WTC11 (cell line): ENCODE measurements at regions of chr1 and their contacts with region 1.

Region 1: GRCh38 chr1:33181921-33182341 is at the start of gene TRIM62:
- DNase-seq: peak; percentile 77
- ATAC-seq: peak; percentile 60
- H3K4me3 Mint-ChIP-seq: peak within 1 kb of the TSS; percentile 79
- H3K27ac Mint-ChIP-seq: peak within 1 kb of the TSS; percentile 60; the same call in 1 of the 2 replicates
- H3K4me1 Mint-ChIP-seq: peaks cover 24% of the 10 kb centered on the region
- H3K27me3 Mint-ChIP-seq: peaks cover 8% of the 10 kb centered on the region
- CTCF ChIP-seq: no peak
- total RNA-seq, gene TRIM62: 10.7 to 13.6 TPM (median 11.0 TPM) in 3 replicates

Region 2: GRCh38 chr1:32861904-32862695 is 319.8 kb before region 1 on chr1:
- CTCF ChIA-PET with region 1: no interaction called
- POLR2A ChIA-PET with region 1: no interaction called
- DNase-seq: no peak
- ATAC-seq: no peak
- H3K4me3 Mint-ChIP-seq: no peak overlapping the region
- H3K27ac Mint-ChIP-seq: no peak overlapping the region
- H3K4me1 Mint-ChIP-seq: no peaks in the 10 kb centered on the region; the same call in 1 of the 2 replicates
- H3K27me3 Mint-ChIP-seq: peaks cover 3% of the 10 kb centered on the region; the same call in 1 of the 2 replicates
- CTCF ChIP-seq: no peak

Region 3: DNA sequence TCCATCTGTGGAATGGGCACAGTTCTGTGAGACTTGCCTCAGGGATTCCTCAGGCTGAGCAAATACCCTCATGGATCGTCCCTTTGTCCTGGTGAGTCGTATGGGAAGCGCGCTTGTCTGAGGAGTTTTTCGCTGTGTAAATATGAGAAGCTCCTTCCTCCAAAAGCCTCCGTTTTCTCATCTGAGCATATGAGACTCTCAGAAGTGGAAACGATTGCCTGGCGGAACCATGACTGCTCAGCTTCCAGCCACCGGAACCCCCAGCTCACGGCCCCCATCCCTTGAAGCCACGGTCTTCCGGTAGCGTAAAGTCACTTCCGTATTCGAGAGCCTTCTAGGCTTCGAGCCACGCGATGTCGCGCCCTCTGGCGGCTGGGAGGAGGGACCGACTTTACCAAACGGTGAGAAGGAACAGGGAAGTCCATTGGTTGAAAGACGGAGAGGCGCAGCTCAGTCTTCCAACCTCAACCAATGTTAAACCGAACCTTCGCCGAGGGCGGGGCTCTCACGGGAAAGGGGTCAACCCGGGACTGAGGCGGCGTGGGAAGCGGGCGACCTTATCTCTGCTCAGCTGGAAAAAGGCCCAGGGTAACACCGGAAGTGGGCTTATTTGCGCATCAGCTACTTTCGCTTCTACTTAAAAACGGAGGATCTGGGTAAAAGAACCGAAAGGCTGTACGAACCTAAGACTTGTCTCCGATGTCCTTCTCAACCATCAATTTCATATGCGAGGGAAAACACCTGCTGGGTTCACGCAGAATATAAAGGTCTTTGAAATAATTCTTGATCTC is 54.7 kb before region 1 on chr1:
- CTCF ChIA-PET with region 1: interaction called, 30 read pairs
- POLR2A ChIA-PET with region 1: no interaction called
- DNase-seq: peak; percentile 95
- ATAC-seq: peak; percentile 97
- H3K4me3 Mint-ChIP-seq: peak overlapping the region; percentile 79
- H3K27ac Mint-ChIP-seq: peak overlapping the region; percentile 28
- H3K4me1 Mint-ChIP-seq: peaks cover 19% of the 10 kb centered on the region
- H3K27me3 Mint-ChIP-seq: peaks cover 36% of the 10 kb centered on the region
- CTCF ChIP-seq: peak; percentile 66

Region 4: DNA sequence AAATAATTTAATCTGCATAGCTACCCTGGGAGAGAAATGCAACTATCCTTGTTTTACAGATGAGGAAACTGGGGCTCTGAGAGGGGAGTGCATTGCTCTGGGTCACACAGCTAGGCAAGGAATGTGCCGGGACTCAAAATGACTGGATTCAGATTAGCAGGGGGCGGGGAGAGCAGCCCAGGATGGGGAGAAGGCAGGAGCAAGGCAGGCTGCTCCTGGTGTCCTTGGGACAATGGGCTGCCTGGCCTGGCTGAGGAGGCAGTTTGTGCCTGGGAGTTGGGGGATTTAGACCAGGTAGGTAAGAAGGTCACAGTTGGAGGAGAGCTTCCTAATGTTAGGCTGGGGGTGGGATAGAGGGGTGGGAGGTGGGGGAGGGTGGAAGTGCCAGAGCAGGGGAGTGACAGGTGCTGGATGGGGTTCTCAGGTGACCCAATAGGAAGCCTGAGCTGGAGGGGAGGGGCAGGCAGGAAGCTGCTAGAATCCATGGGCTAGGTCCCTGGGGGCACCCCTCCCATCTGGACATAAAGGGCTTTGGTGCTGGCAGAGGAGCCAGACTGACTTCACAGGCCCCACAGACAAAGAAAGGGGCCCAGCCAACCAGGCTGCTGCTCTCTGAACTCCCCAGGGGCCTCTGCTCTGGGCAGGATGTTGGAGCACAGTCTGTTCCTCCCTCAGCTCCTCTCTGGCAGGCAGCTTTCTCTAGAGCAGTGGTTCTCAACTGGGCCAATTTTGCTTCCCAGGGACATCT is 29.1 kb before region 1 on chr1:
- CTCF ChIA-PET with region 1: interaction called, 31 read pairs
- POLR2A ChIA-PET with region 1: interaction called, 16 read pairs
- DNase-seq: peak; percentile 78
- ATAC-seq: peak; percentile 87
- H3K4me3 Mint-ChIP-seq: peak overlapping the region; percentile 7; the same call in 1 of the 2 replicates
- H3K27ac Mint-ChIP-seq: peak overlapping the region; percentile 93
- H3K4me1 Mint-ChIP-seq: peaks cover 47% of the 10 kb centered on the region
- H3K27me3 Mint-ChIP-seq: no peaks in the 10 kb centered on the region; the same call in 1 of the 2 replicates
- CTCF ChIP-seq: no peak

Region 5: DNA sequence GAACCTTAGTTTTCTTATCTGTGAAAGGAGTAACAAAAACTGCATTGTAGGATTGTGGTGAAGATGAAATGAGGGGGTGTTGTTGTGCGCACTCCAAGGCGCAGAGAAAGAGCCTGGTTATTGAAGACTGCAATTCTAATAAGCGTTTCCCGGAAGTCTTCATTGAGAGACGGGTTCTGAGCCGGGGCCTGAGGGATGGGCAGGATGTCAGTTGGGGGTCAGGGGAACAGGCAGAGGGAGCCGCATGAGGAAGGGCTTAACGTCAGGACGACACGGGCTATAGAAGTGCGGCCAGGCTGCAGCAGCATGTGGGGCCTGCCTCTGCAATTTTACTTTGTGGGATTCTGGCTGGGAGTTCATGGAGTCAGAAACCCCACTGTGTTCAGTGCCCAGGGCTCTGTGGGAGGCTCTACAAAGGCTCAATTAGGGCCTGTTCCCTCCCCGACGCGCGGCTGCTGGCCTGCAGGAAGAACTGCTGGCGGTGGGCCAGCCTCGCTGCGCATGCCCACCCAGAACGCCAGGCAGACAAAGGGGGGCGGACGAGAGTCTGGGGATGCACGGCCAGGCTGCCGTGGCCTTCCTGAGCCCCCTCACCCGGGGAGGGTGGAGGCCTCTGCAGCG is 20.8 kb before region 1 on chr1:
- CTCF ChIA-PET with region 1: interaction called, 13 read pairs
- POLR2A ChIA-PET with region 1: interaction called, 9 read pairs
- DNase-seq: peak; percentile 33
- ATAC-seq: peak; percentile 24
- H3K4me3 Mint-ChIP-seq: no peak overlapping the region
- H3K27ac Mint-ChIP-seq: no peak overlapping the region
- H3K4me1 Mint-ChIP-seq: peaks cover 52% of the 10 kb centered on the region
- H3K27me3 Mint-ChIP-seq: peaks cover 3% of the 10 kb centered on the region; the same call in 1 of the 2 replicates
- CTCF ChIP-seq: no peak

Region 6: DNA sequence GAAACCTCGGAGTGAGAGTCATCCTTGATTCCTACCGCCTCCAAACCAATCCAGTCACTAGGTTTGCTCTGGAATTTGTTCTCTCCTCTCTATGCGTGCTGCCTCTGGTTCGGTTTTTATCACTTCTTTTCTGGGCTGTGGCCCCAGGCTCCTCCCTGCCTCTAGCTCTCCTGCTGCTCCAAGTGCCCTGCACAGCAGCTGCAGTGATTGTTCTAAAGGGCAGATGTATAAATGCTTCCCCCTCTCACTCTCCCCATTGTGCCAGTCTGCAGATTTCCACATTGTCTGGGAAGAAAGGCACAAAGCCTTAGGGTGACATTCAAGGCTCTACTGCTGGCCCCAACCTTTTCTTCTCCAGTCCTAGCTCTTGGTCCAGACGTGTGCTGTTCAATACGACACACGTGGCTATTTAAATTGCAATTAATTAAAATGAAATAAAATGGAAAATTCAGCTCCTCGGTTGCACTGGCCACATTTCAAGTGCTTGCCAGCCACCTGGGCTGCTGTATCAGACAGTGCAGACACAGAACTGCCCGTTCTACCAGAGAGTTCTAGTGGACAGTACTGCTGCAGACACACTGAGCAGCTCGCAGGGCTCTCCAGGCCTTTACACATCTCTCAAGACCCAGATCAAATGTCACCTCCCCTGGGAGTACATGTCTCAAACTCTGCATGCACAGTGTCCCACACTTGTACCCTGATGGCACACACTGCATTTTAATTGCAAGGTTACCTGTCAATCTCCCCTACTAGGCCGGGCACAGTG is 12.5 kb before region 1 on chr1:
- CTCF ChIA-PET with region 1: interaction called, 10 read pairs
- POLR2A ChIA-PET with region 1: interaction called, 9 read pairs
- DNase-seq: no peak
- ATAC-seq: no peak
- H3K4me3 Mint-ChIP-seq: no peak overlapping the region
- H3K27ac Mint-ChIP-seq: peak overlapping the region; percentile 27; the same call in 1 of the 2 replicates
- H3K4me1 Mint-ChIP-seq: peaks cover 46% of the 10 kb centered on the region
- H3K27me3 Mint-ChIP-seq: no peaks in the 10 kb centered on the region; the same call in 1 of the 2 replicates
- CTCF ChIP-seq: no peak

Region 7: DNA sequence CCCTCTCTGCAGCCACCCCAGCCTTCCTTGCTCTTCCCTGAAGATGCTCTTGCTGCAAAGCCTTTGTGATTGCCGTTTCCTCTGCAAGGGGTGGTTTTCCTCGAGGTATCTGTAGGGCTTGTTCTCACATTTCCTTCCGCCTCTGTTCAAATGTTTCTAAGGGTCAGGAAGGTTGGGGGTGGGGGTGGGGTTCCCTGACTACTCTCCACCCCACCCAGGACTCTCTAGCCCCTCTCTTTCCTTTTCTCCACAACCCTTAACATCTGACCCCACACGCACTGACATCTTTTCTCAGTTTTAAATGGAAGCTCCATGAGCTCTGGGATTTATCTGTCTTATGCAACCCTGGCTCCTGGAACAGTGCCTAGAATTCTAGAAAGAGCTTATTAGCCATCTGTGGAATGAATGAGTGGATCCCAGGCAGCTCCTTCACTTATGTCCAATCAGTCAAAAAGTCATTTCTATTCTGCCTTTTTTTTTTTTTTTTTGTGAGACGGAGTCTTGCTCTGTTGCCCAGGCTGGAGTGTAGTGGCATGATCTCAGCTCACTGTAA is 47.1 kb after region 1 on chr1:
- CTCF ChIA-PET with region 1: no interaction called
- POLR2A ChIA-PET with region 1: no interaction called
- DNase-seq: no peak
- ATAC-seq: no peak
- H3K4me3 Mint-ChIP-seq: no peak overlapping the region
- H3K27ac Mint-ChIP-seq: no peak overlapping the region
- H3K4me1 Mint-ChIP-seq: peaks cover 12% of the 10 kb centered on the region
- H3K27me3 Mint-ChIP-seq: peaks cover 33% of the 10 kb centered on the region
- CTCF ChIP-seq: no peak